HEK293 (cell line): ENCODE measurements at regions of chr16 and their contacts with region 1.

Region 1: GRCh38 chr16:30786936-30787612 is at the start of gene ZNF629:
- H3K4me3 ChIP-seq: peak within 1 kb of the TSS; percentile 96
- H3K27ac ChIP-seq: peak within 1 kb of the TSS; percentile 83
- H3K4me1 ChIP-seq: peaks cover 3% of the 10 kb centered on the region; the same call in 1 of the 2 replicates
- CTCF ChIP-seq: peak; percentile 47; the same call in 1 of the 2 replicates

Region 2: DNA sequence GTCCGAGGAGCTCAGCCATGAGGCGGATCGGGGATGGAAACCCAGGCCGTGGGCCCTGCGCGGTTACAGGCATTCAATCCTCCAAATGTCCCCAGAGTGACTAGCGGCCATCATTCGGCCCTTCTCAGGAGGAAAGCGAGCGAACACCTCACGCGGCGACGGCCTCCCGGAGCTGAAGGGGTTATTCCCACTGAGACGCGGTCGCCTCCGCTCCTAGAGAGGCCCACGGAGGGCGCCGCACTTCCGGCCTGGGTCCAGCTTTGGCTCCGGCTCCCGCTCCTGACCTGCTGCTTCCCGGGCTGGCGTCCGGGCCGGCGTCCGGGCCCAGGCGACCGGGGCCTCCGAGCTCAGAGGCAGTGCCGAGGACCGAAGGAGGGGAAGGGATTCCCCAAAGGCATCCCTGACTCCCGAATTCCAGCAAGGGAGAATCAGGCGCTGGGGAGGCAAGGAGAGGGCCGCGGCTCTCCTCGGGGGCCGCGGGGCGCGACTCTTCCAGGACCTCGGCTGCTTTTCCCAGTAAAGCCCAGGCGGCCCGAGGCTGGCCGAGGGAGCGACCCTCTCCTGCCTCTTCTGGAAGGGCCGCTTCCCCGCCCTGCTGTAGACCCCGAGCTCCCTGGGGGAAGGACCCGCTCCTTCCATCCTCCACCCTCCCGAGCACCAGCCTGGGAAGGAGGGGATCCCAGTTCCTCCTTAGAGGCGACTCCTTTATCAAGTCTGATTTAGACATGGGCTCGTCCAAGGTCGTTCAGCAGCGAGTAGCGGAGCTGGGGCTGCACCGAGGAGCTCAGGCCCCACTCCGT is 18.5 kb after region 1 on chr16:
- CTCF ChIA-PET with region 1: interaction called, 12 read pairs
- POLR2A ChIA-PET with region 1: interaction called, 132 read pairs
- H3K4me3 ChIP-seq: peak overlapping the region; percentile 74
- H3K27ac ChIP-seq: peak overlapping the region; percentile 86
- H3K4me1 ChIP-seq: no peaks in the 10 kb centered on the region
- CTCF ChIP-seq: peak; percentile 79

Region 3: GRCh38 chr16:30820952-30821760 is 34.1 kb after region 1 on chr16:
- CTCF ChIA-PET with region 1: no interaction called
- POLR2A ChIA-PET with region 1: no interaction called
- H3K4me3 ChIP-seq: no peak overlapping the region
- H3K27ac ChIP-seq: no peak overlapping the region
- H3K4me1 ChIP-seq: peaks cover 3% of the 10 kb centered on the region; the same call in 1 of the 2 replicates
- CTCF ChIP-seq: no peak